ENCODE measurements at regions of chr2 and their contacts with region 1.

Region 1: GRCh38 chr2:102063941-102064678 is 72.3 kb downstream of the IL1R2 start:
- DNase-seq: peak; percentile 99
- ATAC-seq: peak; percentile 89
- H3K4me3 ChIP-seq: peak overlapping the region; percentile 14; the same call in 1 of the 2 replicates
- H3K27ac ChIP-seq: peak overlapping the region; percentile 98
- H3K4me1 ChIP-seq: peaks cover 29% of the 10 kb centered on the region
- H3K27me3 ChIP-seq: no peaks in the 10 kb centered on the region
- CTCF ChIP-seq: no peak
- POLR2A ChIP-seq: peak; percentile 47; the same call in 1 of the 2 replicates
- RAD21 ChIP-seq: peak; percentile 29; the same call in 1 of the 2 replicates

Region 2: GRCh38 chr2:102050854-102051391 is 13.2 kb before region 1 on chr2:
- CTCF ChIA-PET with region 1: interaction called, 4 read pairs
- POLR2A ChIA-PET with region 1: interaction called, 10 read pairs
- dilution Hi-C with region 1: no loop called
- in situ Hi-C with region 1: no loop called
- intact Hi-C with region 1: no loop called
- DNase-seq: peak; percentile 91
- ATAC-seq: peak; percentile 62
- H3K4me3 ChIP-seq: no peak overlapping the region
- H3K27ac ChIP-seq: peak overlapping the region; percentile 69
- H3K4me1 ChIP-seq: peaks cover 25% of the 10 kb centered on the region
- H3K27me3 ChIP-seq: no peaks in the 10 kb centered on the region
- CTCF ChIP-seq: no peak
- POLR2A ChIP-seq: no peak
- RAD21 ChIP-seq: no peak

Region 3: GRCh38 chr2:102141970-102142828 is 78.1 kb after region 1 on chr2 and contains the start of gene IL1R1:
- CTCF ChIA-PET with region 1: no interaction called
- POLR2A ChIA-PET with region 1: interaction called, 3 read pairs
- dilution Hi-C with region 1: no loop called
- in situ Hi-C with region 1: no loop called
- intact Hi-C with region 1: loop called (anchors 2 kb)
- DNase-seq: peak; percentile 80
- ATAC-seq: peak; percentile 91
- H3K4me3 ChIP-seq: peak within 1 kb of the TSS; percentile 89
- H3K27ac ChIP-seq: peak within 1 kb of the TSS; percentile 93
- H3K4me1 ChIP-seq: peaks cover 18% of the 10 kb centered on the region
- H3K27me3 ChIP-seq: no peaks in the 10 kb centered on the region
- CTCF ChIP-seq: no peak
- POLR2A ChIP-seq: peak; percentile 83
- RAD21 ChIP-seq: no peak
- total RNA-seq, gene IL1R1: 6.5 and 8.1 TPM in 2 replicates

Region 4: DNA sequence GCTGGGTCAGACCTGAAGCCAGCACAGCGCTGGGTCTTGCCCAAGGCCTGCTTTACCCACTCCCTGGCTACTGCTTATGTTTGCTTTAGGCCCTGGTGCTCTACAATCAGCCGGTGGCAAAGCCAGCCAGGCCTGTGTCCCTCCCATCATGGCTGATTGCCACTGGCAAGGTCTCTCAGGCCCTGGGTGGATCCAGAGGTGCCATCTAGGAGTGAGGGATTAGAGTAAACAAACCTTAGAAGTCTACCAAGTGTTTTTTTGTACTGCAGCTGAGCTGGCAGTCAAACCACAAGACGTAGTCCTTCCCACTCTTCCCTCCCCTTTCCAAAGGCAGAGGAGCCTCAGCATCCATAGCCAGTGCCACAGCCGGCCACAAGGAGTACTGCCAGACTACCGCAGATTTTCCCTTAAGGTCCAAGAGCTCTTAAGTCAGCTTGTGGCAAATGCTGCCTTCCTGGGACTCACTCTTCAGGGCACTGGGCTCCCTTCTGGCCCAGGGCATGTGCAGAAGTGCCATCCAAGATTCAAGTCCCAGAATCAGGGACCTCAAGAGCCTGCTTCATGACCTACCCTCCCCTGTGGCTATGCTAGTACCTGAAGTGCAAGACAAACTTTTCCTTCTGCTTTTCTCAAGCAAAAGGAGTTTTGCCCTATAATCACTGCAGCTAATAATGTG is 142.7 kb after region 1 on chr2:
- CTCF ChIA-PET with region 1: no interaction called
- POLR2A ChIA-PET with region 1: no interaction called
- dilution Hi-C with region 1: no loop called
- in situ Hi-C with region 1: no loop called
- intact Hi-C with region 1: no loop called
- DNase-seq: no peak
- ATAC-seq: no peak
- H3K4me3 ChIP-seq: no peak overlapping the region
- H3K27ac ChIP-seq: no peak overlapping the region
- H3K4me1 ChIP-seq: no peaks in the 10 kb centered on the region
- H3K27me3 ChIP-seq: no peaks in the 10 kb centered on the region
- CTCF ChIP-seq: no peak
- POLR2A ChIP-seq: no peak
- RAD21 ChIP-seq: no peak